Activated CD4-positive, alpha-beta T cell treated with anti-CD3 and anti-CD28 coated beads for 36 hours (primary cell): ENCODE measurements at regions of chr11 and their contacts with region 1.

Region 1: GRCh38 chr11:86781546-86781945 is 18.8 kb upstream of the PRSS23 start:
- DNase-seq: no peak
- ATAC-seq: no peak
- H3K4me3 Mint-ChIP-seq: no peak overlapping the region
- H3K27ac Mint-ChIP-seq: no peak overlapping the region
- H3K4me1 Mint-ChIP-seq: no peaks in the 10 kb centered on the region
- H3K27me3 Mint-ChIP-seq: peaks cover 12% of the 10 kb centered on the region

Region 2: GRCh38 chr11:86818466-86819192 is 37.1 kb after region 1 on chr11:
- CTCF ChIA-PET with region 1: no interaction called
- POLR2A ChIA-PET with region 1: no interaction called
- intact Hi-C with region 1: loop called in 1 of 2 experiments (anchors 1 kb)
- DNase-seq: no peak
- ATAC-seq: no peak
- H3K4me3 Mint-ChIP-seq: no peak overlapping the region
- H3K27ac Mint-ChIP-seq: no peak overlapping the region
- H3K4me1 Mint-ChIP-seq: peaks cover 6% of the 10 kb centered on the region
- H3K27me3 Mint-ChIP-seq: peaks cover 27% of the 10 kb centered on the region

Region 3: DNA sequence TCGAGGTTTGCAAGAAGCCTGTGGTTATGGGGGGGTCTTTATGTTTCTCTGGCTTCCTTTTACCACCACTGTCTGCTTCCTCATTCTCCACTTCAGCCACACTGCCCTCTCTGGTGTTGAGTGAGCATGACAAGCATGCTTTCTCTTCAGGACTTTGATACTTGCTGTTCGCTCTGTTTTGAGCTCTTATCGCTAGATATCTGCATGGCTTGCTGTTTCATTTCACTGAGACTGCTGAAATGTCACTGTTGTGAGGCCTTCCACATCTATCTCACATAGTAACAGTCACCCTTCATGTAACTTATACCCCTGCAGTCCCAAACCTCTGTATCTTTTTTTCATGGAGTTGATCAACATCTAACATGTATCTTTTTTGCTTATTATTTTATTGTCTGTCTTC is 316.0 kb after region 1 on chr11:
- CTCF ChIA-PET with region 1: no interaction called
- POLR2A ChIA-PET with region 1: no interaction called
- intact Hi-C with region 1: no loop called
- DNase-seq: peak; percentile 61
- ATAC-seq: peak; percentile 89
- H3K4me3 Mint-ChIP-seq: no peak overlapping the region
- H3K27ac Mint-ChIP-seq: no peak overlapping the region
- H3K4me1 Mint-ChIP-seq: peaks cover 8% of the 10 kb centered on the region
- H3K27me3 Mint-ChIP-seq: no peaks in the 10 kb centered on the region